Panc1 (cell line): ENCODE measurements at regions of chr12 and their contacts with region 1.

Region 1: DNA sequence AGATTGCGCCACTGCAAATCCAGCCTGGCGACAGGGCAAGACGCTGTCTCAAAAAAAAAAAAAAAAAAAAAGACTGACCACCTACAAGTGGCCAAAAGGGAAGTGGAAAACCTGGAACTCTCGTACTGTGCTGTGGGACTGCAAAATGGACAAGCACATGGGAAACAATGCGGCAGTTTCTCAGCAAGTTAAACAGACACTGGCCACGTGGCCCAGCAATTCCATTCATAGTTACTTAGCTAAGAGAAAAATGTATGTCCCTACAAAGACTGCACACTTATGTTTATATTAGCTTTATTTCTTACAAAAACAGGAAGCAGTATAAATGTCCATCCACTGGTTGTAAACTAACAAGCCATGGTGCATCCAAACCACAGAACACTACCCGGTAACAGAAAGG is 5.6 kb downstream of the CHFR start:
- DNase-seq: no peak
- ATAC-seq: no peak
- H3K4me3 ChIP-seq: no peak overlapping the region
- H3K27ac ChIP-seq: no peak overlapping the region
- H3K4me1 ChIP-seq: no peaks in the 10 kb centered on the region
- H3K27me3 ChIP-seq: no peaks in the 10 kb centered on the region
- CTCF ChIP-seq: no peak

Region 2: GRCh38 chr12:132788375-132789098 is 93.3 kb before region 1 on chr12:
- CTCF ChIA-PET with region 1: interaction called, 10 read pairs
- POLR2A ChIA-PET with region 1: no interaction called
- in situ Hi-C with region 1: no loop called
- intact Hi-C with region 1: no loop called
- DNase-seq: no peak
- ATAC-seq: peak; percentile 71; the same call in 1 of the 2 replicates
- H3K4me3 ChIP-seq: no peak overlapping the region
- H3K27ac ChIP-seq: no peak overlapping the region
- H3K4me1 ChIP-seq: no peaks in the 10 kb centered on the region
- H3K27me3 ChIP-seq: no peaks in the 10 kb centered on the region
- CTCF ChIP-seq: no peak